ENCODE measurements at regions of chr7 and their contacts with region 1.

Region 1: DNA sequence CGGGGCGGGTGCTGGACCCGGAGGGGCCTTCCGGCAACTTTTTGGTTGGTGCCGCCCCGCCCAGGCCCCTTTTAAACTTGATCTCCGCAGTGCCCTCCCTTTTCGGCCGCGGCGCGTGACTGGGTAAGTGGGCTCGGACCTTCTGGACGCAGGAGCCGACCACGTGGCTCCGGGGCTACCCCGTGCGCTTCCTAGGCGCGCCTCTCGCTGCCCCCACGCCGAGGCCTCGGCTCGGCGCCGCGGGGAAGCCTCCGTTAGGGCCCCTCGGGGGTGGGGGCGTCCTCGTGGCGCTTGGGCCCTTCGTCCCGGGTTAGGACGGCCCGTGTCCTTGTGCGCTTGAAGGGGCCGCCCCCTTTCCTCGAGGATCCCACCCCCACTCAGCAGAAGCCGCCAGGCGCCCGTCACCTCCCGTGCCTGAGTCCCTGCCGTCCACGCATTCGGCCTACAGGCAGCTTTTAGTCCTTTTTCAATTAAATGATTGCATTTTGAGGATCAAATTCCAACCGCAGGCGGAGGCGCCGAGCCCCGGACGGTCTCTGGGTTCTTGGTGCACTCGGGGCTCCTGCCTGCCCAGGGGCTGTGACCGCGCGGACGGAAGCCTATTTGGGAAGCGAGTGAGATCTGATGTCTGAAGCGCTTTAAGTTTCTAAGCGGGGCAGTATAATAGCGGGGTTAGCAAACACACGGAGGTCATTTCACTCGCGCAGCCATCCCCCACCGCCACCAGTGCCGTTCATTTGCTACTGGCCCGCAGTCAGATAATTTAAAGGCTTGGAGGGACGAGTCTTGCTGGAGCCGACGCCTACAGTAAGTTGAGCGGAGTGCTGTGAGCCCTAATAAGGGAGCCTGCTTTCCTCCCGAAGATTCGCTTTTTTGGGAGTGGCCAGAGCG is 31.8 kb upstream of the TOMM7 start:
- DNase-seq: peak; percentile 66 to 88
- H3K4me3 ChIP-seq: peak overlapping the region; percentile 81
- H3K27ac ChIP-seq: peak overlapping the region; percentile 52
- H3K4me1 ChIP-seq: peaks cover 49% of the 10 kb centered on the region
- H3K27me3 ChIP-seq: no peaks in the 10 kb centered on the region
- CTCF ChIP-seq: peak; percentile 76; the same call in 1 of the 2 replicates

Region 2: DNA sequence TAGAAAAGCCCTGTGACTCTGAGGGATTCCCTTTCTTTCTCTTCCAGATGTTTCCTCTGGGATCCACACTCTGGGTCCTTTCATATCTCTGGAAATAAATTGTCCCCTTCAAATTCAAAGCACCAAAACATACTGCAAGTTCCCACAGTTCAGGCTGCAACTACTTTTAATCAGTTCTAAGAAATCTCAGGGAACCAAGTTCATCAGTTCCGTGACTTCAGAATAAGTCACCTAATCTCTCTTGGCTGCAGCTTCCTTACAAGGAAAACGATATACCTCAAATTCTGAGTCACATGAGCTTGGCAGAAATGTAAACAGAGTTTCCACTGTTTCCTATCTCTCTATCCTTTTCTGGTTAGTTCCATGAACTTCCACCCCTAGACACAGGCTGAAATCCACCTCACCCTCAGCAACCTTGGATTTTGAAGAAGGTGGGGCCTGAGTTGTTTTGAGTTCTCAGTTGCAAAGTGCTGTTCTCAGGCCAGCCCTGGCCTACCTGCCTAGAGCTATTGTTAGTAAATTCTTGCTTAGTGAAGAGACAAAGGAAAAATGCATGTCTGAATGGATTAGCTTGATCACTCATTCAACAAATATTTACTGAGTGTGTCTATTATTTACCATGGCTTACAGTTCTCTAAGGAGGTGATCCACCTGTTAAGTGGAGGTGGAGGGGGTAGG is 186.7 kb before region 1 on chr7:
- CTCF ChIA-PET with region 1: no interaction called
- POLR2A ChIA-PET with region 1: no interaction called
- intact Hi-C with region 1: loop called (anchors 5 kb)
- DNase-seq: peak; percentile 87 to 100
- H3K4me3 ChIP-seq: no peak overlapping the region; the same call in 1 of the 2 replicates
- H3K27ac ChIP-seq: peak overlapping the region; percentile 94
- H3K4me1 ChIP-seq: peaks cover 71% of the 10 kb centered on the region
- H3K27me3 ChIP-seq: no peaks in the 10 kb centered on the region
- CTCF ChIP-seq: no peak

Region 3: GRCh38 chr7:22822486-22823141 is 31.8 kb before region 1 on chr7 and contains the start of gene TOMM7:
- CTCF ChIA-PET with region 1: no interaction called
- POLR2A ChIA-PET with region 1: interaction called, 8 read pairs
- intact Hi-C with region 1: loop called (anchors 2 kb)
- DNase-seq: peak; percentile 90 to 94
- H3K4me3 ChIP-seq: peak within 1 kb of the TSS; percentile 99
- H3K27ac ChIP-seq: peak within 1 kb of the TSS; percentile 33
- H3K4me1 ChIP-seq: peaks cover 29% of the 10 kb centered on the region
- H3K27me3 ChIP-seq: no peaks in the 10 kb centered on the region
- CTCF ChIP-seq: peak; percentile 65
- total RNA-seq, gene TOMM7: 588 and 703 TPM in 2 replicates

Region 4: GRCh38 chr7:22962775-22963358 is 108.5 kb after region 1 on chr7:
- CTCF ChIA-PET with region 1: no interaction called
- POLR2A ChIA-PET with region 1: interaction called, 44 read pairs
- intact Hi-C with region 1: no loop called
- DNase-seq: no peak
- H3K4me3 ChIP-seq: no peak overlapping the region
- H3K27ac ChIP-seq: no peak overlapping the region
- H3K4me1 ChIP-seq: no peaks in the 10 kb centered on the region
- H3K27me3 ChIP-seq: no peaks in the 10 kb centered on the region
- CTCF ChIP-seq: no peak

Region 5: GRCh38 chr7:23055582-23056178 is 201.3 kb after region 1 on chr7:
- CTCF ChIA-PET with region 1: no interaction called
- POLR2A ChIA-PET with region 1: interaction called, 6 read pairs
- intact Hi-C with region 1: loop called (anchors 2 kb)
- DNase-seq: peak; percentile 49 to 61
- H3K4me3 ChIP-seq: no peak overlapping the region
- H3K27ac ChIP-seq: no peak overlapping the region
- H3K4me1 ChIP-seq: no peaks in the 10 kb centered on the region
- H3K27me3 ChIP-seq: no peaks in the 10 kb centered on the region
- CTCF ChIP-seq: peak; percentile 98

Region 6: GRCh38 chr7:23531794-23532489 is 677.5 kb after region 1 on chr7 and contains the start of gene TRA2A:
- CTCF ChIA-PET with region 1: no interaction called
- POLR2A ChIA-PET with region 1: no interaction called
- intact Hi-C with region 1: loop called (anchors 10 kb)
- DNase-seq: peak; percentile 91 to 98
- H3K4me3 ChIP-seq: peak within 1 kb of the TSS; percentile 89
- H3K27ac ChIP-seq: peak within 1 kb of the TSS; percentile 89
- H3K4me1 ChIP-seq: peaks cover 36% of the 10 kb centered on the region
- H3K27me3 ChIP-seq: no peaks in the 10 kb centered on the region
- CTCF ChIP-seq: no peak
- total RNA-seq, gene TRA2A: 77.0 and 112 TPM in 2 replicates